Dorsolateral prefrontal cortex (tissue), 120 donors: ENCODE measurements at regions of chr17 and their contacts with region 1.

Region 1: GRCh38 chr17:44689477-44690217 is at the start of gene CCDC43:
- DNase-seq: peak; percentile 85 to 93 (median 90)
- H3K4me3 ChIP-seq: peak within 1 kb of the TSS; percentile 65 to 99 (median 87)
- H3K27ac ChIP-seq: peak within 1 kb of the TSS in 58 of 59 donors; percentile 8 to 92 (median 82)
- H3K27me3 ChIP-seq: no peaks in the 10 kb centered on the region
- CTCF ChIP-seq: peak in 33 of 56 donors; percentile 7 to 49 (median 28)
- total RNA-seq, gene CCDC43: 18.2 to 35.2 (median 24.7) TPM

Region 2: GRCh38 chr17:44655983-44656710 is 33.5 kb before region 1 on chr17 and contains the start of gene MEIOC:
- intact Hi-C with region 1: no loop called
- DNase-seq: no peak
- H3K4me3 ChIP-seq: peak within 1 kb of the TSS in 38 of 59 donors; percentile 4 to 51 (median 28)
- H3K27ac ChIP-seq: no peak within 1 kb of the TSS
- H3K27me3 ChIP-seq: peaks cover 0 to 64% (median 30%) of the 10 kb centered on the region in 45 donors
- CTCF ChIP-seq: no peak
- total RNA-seq, gene MEIOC: 0.08 to 1.4 (median 0.30) TPM in 55 of 120 experiments, not detected in the others

Region 3: DNA sequence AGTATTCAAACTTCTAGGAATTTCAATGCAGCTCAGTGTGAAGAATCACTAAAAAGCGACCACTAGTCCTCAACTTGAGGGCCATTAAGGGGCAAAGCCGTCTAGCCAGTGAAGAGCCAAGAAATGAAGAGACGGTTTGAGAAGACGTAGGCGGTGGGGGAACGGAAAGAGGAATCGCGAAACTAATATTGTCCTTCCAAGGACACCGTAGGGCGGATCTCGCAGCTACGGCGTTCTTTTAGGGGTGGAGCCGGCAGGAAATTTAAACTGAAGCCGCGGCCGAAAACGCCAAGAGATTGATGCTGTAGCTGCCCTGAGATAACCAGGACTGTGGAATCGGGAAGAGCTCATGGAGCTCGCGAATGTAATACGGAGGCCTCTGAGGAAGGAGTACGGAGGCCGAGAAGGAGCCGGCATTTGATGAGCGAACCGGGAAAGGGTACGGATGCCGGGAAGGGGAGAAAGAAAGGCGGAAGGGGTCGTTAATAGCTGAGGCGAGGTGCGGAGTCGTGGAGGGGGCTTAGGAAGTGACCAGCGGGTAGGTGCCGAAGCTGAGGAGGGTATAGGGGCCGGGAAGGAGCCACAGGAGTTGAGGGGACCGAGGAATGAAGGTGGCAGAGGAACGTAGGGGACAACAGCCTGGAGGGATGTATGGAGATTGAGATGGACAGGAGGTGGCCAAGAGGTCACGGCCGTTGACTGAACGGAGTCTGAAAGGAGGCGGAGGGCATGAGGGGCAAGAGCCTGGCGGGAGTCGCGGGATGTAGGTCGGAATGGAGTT is 18.9 kb after region 1 on chr17 and contains the start of gene DBF4B:
- intact Hi-C with region 1: loop called in 1 of 2 experiments (anchors 1 kb)
- DNase-seq: peak; percentile 60 to 86 (median 81)
- H3K4me3 ChIP-seq: peak within 1 kb of the TSS; percentile 47 to 95 (median 84)
- H3K27ac ChIP-seq: peak within 1 kb of the TSS in 57 of 59 donors; percentile 16 to 96 (median 82)
- H3K27me3 ChIP-seq: no peaks in the 10 kb centered on the region
- CTCF ChIP-seq: peak in 28 of 56 donors; percentile 9 to 58 (median 30)
- total RNA-seq, gene DBF4B: 11.7 to 42.8 (median 23.1) TPM

Region 4: DNA sequence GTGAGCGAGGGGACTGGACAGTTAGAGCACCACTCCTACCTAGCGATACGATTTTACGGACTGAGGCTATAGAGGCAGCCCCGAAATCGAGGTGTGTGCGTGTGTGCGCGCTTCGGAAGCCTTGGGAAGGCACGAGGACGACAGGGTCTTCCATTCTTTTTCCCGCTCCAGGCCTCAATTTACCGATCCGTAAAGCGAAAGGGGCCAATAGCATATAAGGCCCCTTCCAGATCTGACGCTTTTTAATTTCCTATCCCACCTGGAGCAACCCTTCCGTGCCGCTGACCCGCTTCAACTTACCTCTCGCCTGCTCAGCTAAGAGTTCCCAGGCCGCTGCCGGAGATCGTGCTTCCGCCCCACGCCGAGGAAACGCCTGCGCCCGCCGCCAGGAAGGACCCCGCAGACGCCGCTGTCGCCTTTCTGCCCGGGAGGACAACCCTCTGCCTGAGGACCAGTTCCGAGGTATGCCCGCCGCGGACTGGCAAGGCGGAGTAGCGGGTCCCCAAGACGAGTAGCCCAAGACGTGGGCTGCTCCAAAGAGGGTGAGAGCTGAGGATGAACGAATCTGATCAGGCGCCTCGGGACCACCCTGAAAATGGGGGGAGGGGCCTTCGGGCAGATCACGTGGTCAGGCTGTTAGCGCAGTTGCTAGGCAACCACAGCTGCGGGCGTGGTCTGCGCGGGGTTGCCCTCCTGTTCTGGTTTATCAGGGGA is 209.6 kb after region 1 on chr17 and contains the start of gene EFTUD2:
- intact Hi-C with region 1: loop called in 1 of 2 experiments (anchors 1 kb)
- DNase-seq: peak; percentile 85 to 94 (median 88)
- H3K4me3 ChIP-seq: peak within 1 kb of the TSS; percentile 65 to 98 (median 86)
- H3K27ac ChIP-seq: peak within 1 kb of the TSS; percentile 80 to 99 (median 97)
- H3K27me3 ChIP-seq: no peaks in the 10 kb centered on the region
- CTCF ChIP-seq: peak in 35 of 56 donors; percentile 12 to 56 (median 33)
- total RNA-seq, gene EFTUD2: 50.3 to 123 (median 95.1) TPM